Transverse colon (tissue), 4 donors: ENCODE measurements at regions of chr18 and their contacts with region 1.

Region 1: DNA sequence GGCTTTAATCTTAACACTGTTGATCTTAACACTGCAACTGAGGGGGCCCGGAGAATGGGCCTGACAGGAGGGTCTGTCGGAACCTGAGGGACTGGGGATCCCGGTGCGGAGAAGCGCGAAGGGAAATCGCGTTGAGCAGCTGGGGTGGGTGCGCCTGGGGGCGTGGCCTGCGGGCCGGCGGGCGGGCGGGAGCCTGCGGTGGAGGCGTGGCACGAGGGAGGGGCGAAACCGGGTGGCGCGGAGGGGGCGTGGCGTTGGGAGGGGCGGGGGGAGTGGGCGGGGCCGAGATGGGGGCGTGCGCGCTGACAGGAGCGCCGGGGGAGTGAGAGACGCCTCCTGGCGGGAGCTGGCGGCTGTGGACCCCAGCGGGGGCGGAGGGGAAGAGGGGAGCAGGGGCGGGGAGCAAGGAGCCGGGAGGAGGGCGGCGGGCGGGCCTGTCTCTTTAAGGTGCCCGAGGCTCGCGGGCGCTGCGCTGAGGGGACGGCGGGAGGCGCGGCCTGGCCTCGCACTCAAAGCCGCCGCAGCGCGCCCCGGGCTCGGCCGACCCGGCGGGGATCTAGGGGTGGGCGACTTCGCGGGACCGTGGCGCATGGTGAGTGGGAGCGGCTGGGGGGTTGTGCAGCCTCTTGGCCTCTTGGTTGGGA is at the start of gene TWSG1:
- DNase-seq: peak; percentile 94
- H3K4me3 ChIP-seq: peak within 1 kb of the TSS; percentile 79 to 95 (median 88)
- H3K27ac ChIP-seq: peak within 1 kb of the TSS; percentile 93 to 95 (median 94)
- H3K4me1 ChIP-seq: peaks cover 0 to 19% (median 11%) of the 10 kb centered on the region in 4 donors
- H3K27me3 ChIP-seq: no peaks in the 10 kb centered on the region
- CTCF ChIP-seq: peak in 3 of 5 experiments; percentile 24 to 52 (median 48)
- EP300 ChIP-seq: no peak
- POLR2A ChIP-seq: peak; percentile 55
- total RNA-seq, gene TWSG1: 5.6 to 29.5 (median 26.5) TPM

Region 2: DNA sequence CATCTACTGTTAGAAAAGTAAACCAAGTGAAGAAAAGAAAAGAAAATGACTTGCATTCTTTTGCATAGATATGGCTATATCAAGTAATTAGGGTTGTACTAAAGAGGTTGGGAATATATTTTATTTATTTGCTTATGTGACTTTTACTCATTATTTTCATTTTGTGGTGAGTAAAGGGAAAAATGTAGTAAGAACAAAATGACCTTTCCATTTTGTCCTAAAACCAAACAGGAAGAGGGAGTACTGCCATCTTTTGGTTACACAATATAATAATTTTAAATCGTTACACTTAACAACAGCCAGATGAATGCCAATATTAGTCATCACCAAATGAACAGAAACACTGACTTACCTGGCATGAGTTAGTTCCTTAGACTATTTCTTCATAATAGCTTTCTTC is 279.3 kb before region 1 on chr18:
- in situ Hi-C with region 1: loop called in 1 of 4 experiments (anchors 25 kb)
- intact Hi-C with region 1: loop called (anchors 10 kb)
- DNase-seq: no peak
- H3K4me3 ChIP-seq: no peak overlapping the region
- H3K27ac ChIP-seq: no peak overlapping the region
- H3K4me1 ChIP-seq: peaks cover 0 to 7% (median 0%) of the 10 kb centered on the region in 4 donors
- H3K27me3 ChIP-seq: no peaks in the 10 kb centered on the region
- CTCF ChIP-seq: no peak
- EP300 ChIP-seq: no peak
- POLR2A ChIP-seq: no peak

Region 3: DNA sequence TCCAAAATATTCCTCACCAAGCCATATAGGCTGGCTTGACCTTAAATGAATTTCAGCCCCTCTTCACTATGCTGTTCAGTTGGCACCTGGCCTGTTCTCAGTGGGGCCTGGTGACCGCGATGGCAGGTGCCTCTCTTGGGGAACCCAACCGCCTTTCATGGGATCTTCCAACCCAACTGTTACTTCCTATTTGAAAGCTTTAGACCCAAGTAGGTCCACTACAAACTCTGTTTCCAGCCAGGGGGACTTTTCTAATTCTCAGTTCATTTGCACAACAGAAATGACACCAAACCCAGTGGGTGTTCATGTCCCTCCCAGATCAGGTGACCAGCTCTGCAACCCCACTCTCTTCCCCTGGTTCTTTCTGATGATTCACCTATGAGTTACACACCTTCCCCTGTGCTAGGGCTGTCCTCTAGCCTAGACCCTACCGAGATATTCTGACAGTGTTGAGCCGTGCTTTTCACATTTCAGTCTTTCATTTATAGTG is 267.6 kb before region 1 on chr18:
- in situ Hi-C with region 1: loop called in 1 of 4 experiments (anchors 25 kb)
- intact Hi-C with region 1: loop called (anchors 10 kb)
- DNase-seq: peak; percentile 69
- H3K4me3 ChIP-seq: no peak overlapping the region
- H3K27ac ChIP-seq: peak overlapping the region in 2 of 4 donors; percentile 21 to 54
- H3K4me1 ChIP-seq: peaks cover 0 to 10% (median 0%) of the 10 kb centered on the region in 4 donors
- H3K27me3 ChIP-seq: no peaks in the 10 kb centered on the region
- CTCF ChIP-seq: no peak
- EP300 ChIP-seq: no peak
- POLR2A ChIP-seq: no peak

Region 4: GRCh38 chr18:9095297-9096006 is 239.0 kb before region 1 on chr18:
- in situ Hi-C with region 1: loop called in 2 of 4 experiments (anchors 25 kb)
- intact Hi-C with region 1: no loop called
- DNase-seq: peak; percentile 30
- H3K4me3 ChIP-seq: no peak overlapping the region
- H3K27ac ChIP-seq: peak overlapping the region; percentile 55 to 77 (median 73)
- H3K4me1 ChIP-seq: peaks cover 7 to 31% (median 11%) of the 10 kb centered on the region in 4 donors
- H3K27me3 ChIP-seq: no peaks in the 10 kb centered on the region
- CTCF ChIP-seq: no peak
- EP300 ChIP-seq: no peak
- POLR2A ChIP-seq: no peak

Region 5: DNA sequence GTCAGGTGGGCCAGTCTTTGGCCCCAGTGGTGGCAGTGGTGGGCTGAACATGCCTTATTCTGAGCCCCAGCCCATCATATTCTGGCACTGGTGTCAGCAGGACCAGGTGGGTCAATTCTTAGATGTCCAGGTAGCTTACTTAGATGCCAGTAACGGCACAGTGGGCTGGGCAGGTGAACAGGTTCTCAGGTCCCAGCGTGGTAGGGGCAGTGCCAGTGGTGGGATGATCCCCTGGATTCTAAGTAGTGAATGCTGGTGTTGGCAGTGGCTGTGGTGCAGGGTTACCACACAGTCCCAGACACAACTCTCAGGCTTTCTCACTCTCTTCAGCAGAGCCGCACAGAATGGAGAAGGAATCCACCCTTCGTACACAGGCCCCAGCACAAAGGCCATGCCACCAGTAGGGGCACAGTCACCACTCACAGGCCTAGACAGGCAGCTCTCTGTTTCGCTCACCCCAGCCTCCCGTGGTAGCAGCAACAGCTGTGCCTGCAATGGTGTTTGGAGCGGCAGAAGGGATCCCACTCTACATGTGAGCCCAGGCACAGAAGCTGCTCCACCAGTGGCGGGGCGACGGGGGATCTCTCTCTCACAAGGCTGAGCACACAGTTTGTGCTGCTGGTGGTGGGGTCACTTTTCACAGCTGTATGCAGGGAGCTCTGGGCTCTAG is 100.5 kb before region 1 on chr18:
- in situ Hi-C with region 1: no loop called
- intact Hi-C with region 1: no loop called
- DNase-seq: no peak
- H3K4me3 ChIP-seq: no peak overlapping the region
- H3K27ac ChIP-seq: no peak overlapping the region
- H3K4me1 ChIP-seq: no peaks in the 10 kb centered on the region
- H3K27me3 ChIP-seq: no peaks in the 10 kb centered on the region
- CTCF ChIP-seq: no peak
- EP300 ChIP-seq: no peak
- POLR2A ChIP-seq: no peak

Region 6: DNA sequence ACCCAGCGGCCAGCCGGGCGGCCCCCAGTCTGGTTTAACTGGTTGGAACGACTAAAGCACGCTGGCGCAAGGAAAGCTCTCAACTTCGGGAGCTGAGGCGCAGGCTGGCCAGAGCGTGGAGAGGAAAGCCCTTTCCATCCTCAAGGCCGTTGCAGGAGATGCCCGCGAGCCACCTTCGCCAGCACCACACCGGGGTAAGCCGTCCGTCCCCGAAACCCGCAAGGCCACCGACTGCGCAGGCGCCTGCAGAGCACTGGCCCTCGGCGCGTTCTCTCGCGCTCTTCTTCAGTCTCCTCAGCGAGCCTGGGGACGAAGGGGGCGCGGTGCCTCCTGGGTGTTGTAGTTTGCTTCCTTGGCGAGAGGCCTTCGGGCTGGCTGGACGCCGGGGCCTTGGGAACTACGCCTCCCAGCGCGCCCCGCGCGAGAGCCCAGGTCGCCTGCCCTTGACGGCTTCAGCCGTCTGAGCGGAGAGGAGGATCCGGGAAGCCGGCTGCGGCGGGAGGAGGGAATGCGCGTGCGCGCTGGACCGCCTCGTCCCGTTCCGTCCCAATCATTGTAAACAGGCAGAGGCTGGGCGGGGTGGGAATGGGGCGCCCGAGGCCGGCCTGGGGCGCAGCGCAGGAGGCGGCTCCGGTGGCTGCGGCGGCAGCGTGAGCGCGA is 140.7 kb after region 1 on chr18 and contains the start of gene RALBP1:
- in situ Hi-C with region 1: no loop called
- intact Hi-C with region 1: loop called (anchors 10 kb)
- DNase-seq: peak; percentile 100
- H3K4me3 ChIP-seq: peak within 1 kb of the TSS; percentile 81 to 98 (median 86)
- H3K27ac ChIP-seq: peak within 1 kb of the TSS; percentile 95 to 96 (median 96)
- H3K4me1 ChIP-seq: peaks cover 7 to 24% (median 16%) of the 10 kb centered on the region in 4 donors
- H3K27me3 ChIP-seq: no peaks in the 10 kb centered on the region
- CTCF ChIP-seq: peak in 2 of 5 experiments; percentile 4 to 14
- EP300 ChIP-seq: no peak
- POLR2A ChIP-seq: peak; percentile 87
- total RNA-seq, gene RALBP1: 34.2 to 93.3 (median 70.6) TPM

Region 7: GRCh38 chr18:9516437-9517064 is 182.1 kb after region 1 on chr18:
- in situ Hi-C with region 1: loop called in 2 of 4 experiments (anchors 25 kb)
- intact Hi-C with region 1: no loop called
- DNase-seq: no peak
- H3K4me3 ChIP-seq: no peak overlapping the region
- H3K27ac ChIP-seq: peak overlapping the region in 1 of 4 donors; percentile 34
- H3K4me1 ChIP-seq: peaks cover 0 to 17% (median 0%) of the 10 kb centered on the region in 4 donors
- H3K27me3 ChIP-seq: no peaks in the 10 kb centered on the region
- CTCF ChIP-seq: peak; percentile 75 to 91 (median 81)
- EP300 ChIP-seq: no peak
- POLR2A ChIP-seq: no peak

Region 8: DNA sequence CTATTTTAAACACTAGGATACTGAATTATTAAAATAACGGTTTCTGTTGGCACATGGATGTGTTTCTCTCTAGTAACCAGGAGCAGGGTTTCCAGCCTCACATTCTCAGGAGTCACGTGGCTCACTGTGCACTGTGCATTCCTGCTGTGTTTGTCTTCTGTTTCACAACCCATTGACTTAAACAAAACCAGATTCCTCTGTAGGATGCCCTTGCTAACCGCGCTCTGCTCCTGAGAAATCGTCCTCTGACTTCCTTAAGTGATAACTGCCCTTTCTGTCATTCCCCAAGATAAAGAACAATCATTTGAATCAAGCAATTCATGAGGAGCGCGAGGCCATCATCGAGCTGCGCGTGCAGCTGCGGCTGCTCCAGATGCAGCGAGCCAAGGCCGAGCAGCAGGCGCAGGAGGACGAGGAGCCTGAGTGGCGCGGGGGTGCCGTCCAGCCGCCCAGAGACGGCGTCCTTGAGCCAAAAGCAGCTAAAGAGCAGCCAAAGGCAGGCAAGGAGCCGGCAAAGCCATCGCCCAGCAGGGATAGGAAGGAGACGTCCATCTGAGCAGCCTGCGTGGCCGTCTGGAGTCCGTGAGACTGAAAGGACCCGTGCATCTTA is 201.0 kb after region 1 on chr18:
- in situ Hi-C with region 1: loop called in 1 of 4 experiments (anchors 10 kb)
- intact Hi-C with region 1: no loop called
- DNase-seq: no peak
- H3K4me3 ChIP-seq: no peak overlapping the region
- H3K27ac ChIP-seq: peak overlapping the region in 3 of 4 donors; percentile 40 to 70 (median 59)
- H3K4me1 ChIP-seq: no peaks in the 10 kb centered on the region
- H3K27me3 ChIP-seq: no peaks in the 10 kb centered on the region
- CTCF ChIP-seq: no peak
- EP300 ChIP-seq: no peak
- POLR2A ChIP-seq: no peak